AG04449 (cell line): ENCODE measurements at regions of chr2 and their contacts with region 1.

Region 1: DNA sequence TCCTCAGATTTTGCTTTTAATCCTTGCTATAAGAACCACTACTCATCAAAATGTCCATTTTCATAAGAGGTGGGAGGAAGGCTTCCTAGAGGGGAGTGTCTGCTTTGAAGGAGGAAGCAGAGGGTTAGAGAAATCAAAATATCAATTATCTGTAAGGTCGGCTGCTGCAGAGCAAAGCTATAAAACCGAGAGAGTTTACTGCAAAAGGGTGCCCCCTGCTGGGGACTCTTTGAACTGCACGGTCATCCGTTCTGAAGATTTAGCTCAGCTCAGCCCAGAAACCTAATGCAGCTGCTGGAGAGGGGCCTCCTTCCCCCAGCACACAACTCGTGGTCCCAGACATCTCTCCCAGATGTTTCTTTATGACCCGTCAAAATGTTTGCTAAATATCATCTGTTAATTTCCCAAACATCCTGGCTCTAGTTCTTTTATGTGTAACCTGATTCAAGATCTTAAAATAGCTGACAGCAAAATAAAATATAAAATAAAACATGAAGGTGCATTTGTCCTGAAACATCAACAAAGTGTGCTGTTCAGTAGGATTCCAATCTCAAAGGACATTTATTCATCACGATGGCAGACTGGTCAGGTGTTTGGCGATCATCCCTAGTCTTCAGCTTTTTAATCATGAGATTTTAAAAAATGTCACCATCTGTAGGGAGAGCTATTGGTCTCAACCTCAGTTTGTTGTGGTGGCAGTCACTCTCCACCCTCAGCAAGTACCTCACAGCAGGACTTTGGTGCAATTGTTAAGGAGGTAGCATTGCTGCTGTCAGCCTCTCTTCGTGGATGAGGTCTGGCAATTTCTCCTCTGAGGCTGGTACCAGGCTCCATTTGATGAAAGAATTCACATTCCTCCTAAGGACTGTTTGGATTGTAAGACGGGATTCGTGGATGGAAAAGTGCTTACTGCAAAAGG is 185.9 kb downstream of the MTX2 start:
- DNase-seq: no peak
- H3K4me3 ChIP-seq: no peak overlapping the region
- CTCF ChIP-seq: peak; percentile 71

Region 2: DNA sequence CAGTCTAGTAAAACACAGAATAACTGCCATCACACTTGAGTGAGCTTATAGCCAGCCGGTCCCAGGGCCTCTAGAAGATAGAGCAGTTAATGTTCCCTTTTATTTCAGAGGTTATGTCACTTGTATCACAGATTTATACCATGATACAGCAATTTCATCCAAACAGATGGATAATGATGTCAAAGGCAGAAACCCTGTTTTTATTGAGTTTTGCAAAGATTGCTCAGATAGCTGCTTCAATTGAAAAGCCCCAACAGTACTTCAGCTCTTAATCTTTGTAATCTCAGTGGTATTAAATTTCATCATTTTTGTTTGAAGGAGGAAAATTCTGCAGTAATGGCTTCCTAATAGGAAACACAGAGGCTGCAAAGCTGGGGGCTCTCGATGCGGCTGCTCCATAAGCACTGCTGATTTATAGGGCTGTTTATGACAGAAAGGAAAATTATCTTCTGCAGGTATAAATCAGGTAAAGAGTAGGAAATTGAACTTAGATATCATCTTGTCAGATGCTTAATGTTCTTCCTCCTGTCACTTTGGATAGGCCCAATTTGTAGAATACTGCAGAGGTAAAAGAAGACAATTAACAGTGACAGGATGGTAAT is 565.4 kb before region 1 on chr2:
- CTCF ChIA-PET with region 1: no interaction called
- POLR2A ChIA-PET with region 1: no interaction called
- DNase-seq: no peak
- H3K4me3 ChIP-seq: no peak overlapping the region
- CTCF ChIP-seq: no peak

Region 3: DNA sequence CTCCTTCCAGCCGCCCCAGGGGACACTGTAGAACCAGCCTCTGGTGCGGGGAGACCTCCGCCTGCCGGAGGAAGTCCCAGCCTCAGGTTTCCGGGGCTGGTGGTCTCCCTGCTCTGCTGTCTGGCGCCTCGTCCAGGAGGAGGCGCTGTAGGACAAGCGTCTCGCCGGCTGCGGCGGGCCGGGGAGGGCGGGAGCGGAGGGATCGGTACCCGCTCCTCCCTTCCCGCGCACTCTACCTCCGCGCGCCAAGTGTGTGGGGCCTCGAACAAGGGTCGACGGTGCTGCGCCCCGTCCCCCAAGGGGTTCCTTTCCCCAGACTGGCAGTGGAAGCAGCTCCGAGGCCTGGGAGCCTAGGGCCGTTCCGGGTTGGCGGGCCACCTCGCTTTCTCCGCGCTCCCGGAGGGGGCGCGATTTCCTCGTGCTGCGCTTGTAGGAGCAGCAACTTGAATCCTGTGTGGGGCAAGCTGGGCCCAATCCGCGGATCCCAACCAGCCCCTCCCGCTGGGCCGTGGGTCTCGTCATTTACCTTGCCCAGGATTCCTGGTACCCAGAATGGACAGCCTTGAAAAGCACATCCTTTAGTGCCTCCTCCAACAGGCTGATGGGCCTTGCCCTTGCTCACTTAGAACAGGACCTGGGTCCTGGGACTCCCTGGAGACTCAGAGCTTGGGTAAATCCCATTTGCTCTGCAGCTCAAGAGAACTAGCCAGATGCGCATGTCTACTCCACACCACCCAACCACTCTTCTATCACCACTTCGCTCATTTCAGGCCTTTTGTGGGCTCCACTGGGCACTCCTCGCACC is 314.4 kb before region 1 on chr2:
- CTCF ChIA-PET with region 1: interaction called, 315 read pairs
- POLR2A ChIA-PET with region 1: interaction called, 4 read pairs
- DNase-seq: no peak
- H3K4me3 ChIP-seq: peak overlapping the region; percentile 71
- CTCF ChIP-seq: peak; percentile 98

Region 4: GRCh38 chr2:176178038-176178756 is 277.0 kb before region 1 on chr2:
- CTCF ChIA-PET with region 1: interaction called, 10 read pairs
- POLR2A ChIA-PET with region 1: no interaction called
- DNase-seq: no peak
- H3K4me3 ChIP-seq: peak overlapping the region; percentile 60
- CTCF ChIP-seq: no peak

Region 5: DNA sequence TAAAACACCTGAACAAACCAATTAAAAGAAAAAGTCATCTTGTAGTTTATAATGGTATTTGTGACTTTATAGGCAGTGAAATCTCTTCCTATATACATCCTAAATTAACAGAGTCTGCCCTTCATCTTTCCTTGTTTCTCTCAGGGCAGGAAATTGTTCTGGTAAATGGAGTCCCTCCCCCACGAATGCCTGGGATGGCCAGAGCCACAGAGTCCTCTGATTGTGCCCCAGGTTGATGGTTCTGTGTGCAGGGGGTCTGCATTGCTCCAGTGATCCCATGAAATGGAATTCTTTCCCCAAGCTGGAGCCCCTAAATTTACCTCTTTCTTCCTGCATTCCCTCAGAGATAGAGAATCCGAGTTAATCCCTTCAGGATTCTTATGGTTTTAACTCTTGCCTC is 30.4 kb before region 1 on chr2:
- CTCF ChIA-PET with region 1: interaction called, 11 read pairs
- POLR2A ChIA-PET with region 1: no interaction called
- DNase-seq: no peak
- H3K4me3 ChIP-seq: no peak overlapping the region
- CTCF ChIP-seq: no peak

Region 6: DNA sequence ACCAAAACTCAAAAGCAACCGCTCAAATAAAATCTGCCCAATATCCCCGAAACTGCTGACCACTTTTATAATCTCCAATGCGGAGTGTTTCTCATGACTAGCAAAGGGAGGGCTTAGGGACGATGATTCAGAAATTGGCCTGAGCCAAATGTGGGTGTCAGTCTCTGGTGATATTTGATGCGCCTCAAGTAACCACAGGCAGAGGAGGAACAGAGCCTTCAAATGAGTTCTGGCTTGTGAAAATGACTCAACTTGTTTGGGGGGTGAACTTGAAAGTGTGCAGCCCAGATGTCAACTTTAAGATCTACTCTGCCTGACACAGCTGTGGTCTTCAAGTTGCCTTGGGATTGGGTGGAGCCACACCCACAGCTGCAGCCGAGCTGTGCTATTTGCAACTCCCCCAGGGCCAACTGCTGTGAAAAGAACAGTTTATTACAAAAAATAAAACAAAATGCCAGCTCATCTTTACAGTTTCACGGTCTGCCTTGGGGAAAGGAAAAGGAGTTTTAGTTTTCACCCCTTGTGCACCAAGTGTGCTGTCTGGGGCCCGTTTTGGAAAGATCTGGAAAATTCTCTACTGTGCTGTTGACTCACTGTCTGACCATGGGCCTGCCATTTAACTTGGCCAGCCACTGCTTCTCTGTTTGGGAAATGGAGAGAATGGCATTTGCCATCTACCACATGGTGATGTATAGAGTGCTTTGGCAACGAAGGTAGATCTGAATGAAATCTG is 36.2 kb after region 1 on chr2:
- CTCF ChIA-PET with region 1: interaction called, 29 read pairs
- POLR2A ChIA-PET with region 1: no interaction called
- DNase-seq: peak; percentile 99
- H3K4me3 ChIP-seq: no peak overlapping the region
- CTCF ChIP-seq: no peak

Region 7: GRCh38 chr2:176653479-176654443 is 198.6 kb after region 1 on chr2:
- CTCF ChIA-PET with region 1: interaction called, 26 read pairs
- POLR2A ChIA-PET with region 1: no interaction called
- DNase-seq: no peak
- H3K4me3 ChIP-seq: no peak overlapping the region
- CTCF ChIP-seq: peak; percentile 86

Region 8: GRCh38 chr2:177353187-177353478 is 898.0 kb after region 1 on chr2:
- CTCF ChIA-PET with region 1: no interaction called
- POLR2A ChIA-PET with region 1: no interaction called
- DNase-seq: no peak
- H3K4me3 ChIP-seq: no peak overlapping the region
- CTCF ChIP-seq: no peak